Sciatic nerve (tissue), 2 donors: ENCODE measurements at regions of chr19 and their contacts with region 1.

Region 1: DNA sequence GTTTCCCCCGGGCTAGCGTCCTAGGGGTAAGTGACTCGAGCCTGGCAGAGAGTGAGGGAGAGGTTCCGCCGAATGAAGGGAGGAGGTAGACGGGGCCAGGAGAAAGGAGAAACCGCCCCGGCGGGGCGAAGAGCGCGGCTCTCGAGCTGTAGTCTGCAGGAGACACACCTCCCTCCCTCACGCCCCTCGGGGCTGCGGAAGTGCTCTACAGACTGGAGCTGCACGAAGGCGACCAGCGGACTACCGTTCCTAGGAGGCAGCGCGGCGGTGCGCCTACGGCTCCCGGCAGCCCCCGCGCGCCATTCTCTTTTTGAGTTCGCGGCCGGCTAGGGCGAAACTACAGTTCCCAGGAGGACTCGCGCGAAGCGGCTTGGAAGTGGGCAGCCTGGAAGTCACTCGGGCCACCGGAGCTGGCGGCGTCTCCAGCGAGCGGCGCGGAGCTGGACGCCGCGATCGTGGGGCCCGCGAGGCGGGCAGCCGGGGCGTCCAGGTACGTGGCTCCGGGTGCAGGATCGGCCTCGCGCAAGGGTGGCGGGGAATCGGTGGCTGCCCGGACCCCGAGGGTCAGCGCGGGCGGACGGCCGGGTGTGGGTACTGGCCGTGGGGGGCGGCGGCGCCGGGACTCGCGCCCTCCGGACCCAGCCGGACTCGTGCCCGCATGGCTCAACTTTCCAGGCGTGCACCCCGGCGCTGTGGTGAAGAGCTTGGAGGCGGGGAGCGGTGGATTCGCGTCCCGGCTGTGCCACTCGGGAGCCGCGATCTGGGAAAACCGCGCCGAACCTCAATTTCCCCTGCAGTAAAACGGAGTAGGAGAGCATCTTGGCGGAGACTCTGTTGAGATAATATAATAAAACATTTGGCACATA is at the start of gene SIPA1L3:
- DNase-seq: peak; percentile 95
- ATAC-seq: peak; percentile 98
- total RNA-seq, gene SIPA1L3: 26.1 TPM

Region 2: DNA sequence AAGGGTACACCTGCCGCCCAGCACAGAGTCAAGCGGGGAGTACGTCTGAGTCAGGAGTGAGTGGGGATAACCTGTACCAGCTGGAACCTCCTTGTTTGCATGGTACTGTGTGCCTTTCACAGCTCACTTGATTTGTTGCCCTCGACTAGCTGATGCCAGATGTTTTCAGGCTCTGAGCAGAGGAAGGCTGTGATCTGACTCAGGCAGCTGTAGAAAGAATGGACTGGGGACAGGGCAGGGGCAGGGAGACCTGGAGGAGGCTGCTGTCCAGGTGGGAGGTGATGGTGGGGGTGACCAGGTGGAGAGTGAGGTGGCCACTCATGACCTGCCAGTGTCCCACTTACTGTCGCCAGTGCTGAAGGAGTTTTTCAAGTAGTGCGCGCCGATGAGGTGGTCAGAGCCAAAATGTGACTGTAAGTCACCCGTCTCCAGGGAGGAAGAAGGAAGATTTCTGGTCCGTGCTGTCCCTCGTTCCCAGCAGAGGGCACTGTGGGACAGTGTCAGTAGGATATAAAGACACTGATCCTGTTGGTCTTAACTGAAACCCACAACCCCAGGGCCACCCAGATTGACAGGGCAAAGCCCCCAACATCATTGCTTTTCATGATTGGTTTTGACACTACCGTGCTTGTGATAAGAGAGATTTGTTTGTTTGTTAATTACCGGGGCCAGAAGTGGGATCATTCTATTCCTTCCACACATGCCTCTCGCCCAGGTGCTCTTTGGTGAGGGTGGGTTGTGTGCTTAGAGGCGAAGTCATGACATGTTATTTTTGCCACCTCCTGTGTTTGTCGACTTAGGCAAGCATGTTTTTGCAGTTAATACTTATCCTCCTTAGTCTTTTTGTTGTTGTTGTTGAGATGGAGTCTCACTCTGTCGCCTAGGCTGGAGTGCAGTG is 188.6 kb after region 1 on chr19:
- intact Hi-C with region 1: loop called (anchors 10 kb)
- DNase-seq: peak; percentile 78
- ATAC-seq: peak; percentile 70

Region 3: GRCh38 chr19:38335949-38336637 is 429.0 kb after region 1 on chr19:
- intact Hi-C with region 1: loop called (anchors 5 kb)
- DNase-seq: peak; percentile 97
- ATAC-seq: peak; percentile 95